Pancreas (tissue), 10 donors: ENCODE measurements at regions of chr3 and their contacts with region 1.

Region 1: DNA sequence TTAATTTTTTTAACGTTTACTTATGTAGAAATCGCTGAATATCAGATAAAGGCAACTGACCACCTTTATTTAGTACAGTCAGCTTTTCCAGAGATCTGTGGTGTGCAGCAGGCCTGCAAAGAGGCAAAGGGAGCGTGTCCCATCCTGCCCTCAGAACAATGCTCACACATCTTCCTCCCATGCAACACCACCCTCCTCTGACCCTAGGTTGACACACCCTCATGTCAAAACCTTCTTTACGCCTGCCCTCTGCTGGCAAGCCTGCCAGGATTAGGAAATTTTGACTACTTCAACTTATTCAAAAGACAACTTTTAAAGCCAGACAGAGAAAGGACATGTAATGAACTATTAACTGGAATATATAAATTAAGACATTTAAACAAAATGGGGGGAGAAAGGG is 513.7 kb downstream of the FOXP1 start:
- DNase-seq: peak in 2 of 6 donors; percentile 31 to 41
- ATAC-seq: peak in 2 of 4 donors; percentile 18 to 36
- H3K4me3 ChIP-seq: no peak overlapping the region
- H3K27ac ChIP-seq: no peak overlapping the region
- H3K4me1 ChIP-seq: peaks cover 4 to 23% (median 19%) of the 10 kb centered on the region in 3 donors
- H3K27me3 ChIP-seq: no peaks in the 10 kb centered on the region
- CTCF ChIP-seq: peak in 1 of 4 donors; percentile 10

Region 2: GRCh38 chr3:70832441-70833181 is 237.2 kb before region 1 on chr3:
- intact Hi-C with region 1: no loop called
- DNase-seq: no peak
- ATAC-seq: peak in 3 of 4 donors; percentile 39 to 86 (median 70)
- H3K4me3 ChIP-seq: no peak overlapping the region
- H3K27ac ChIP-seq: no peak overlapping the region
- H3K4me1 ChIP-seq: peaks cover 0 to 3% (median 0%) of the 10 kb centered on the region in 3 donors
- H3K27me3 ChIP-seq: no peaks in the 10 kb centered on the region
- CTCF ChIP-seq: no peak

Region 3: GRCh38 chr3:70943886-70944285 is 125.9 kb before region 1 on chr3:
- intact Hi-C with region 1: no loop called
- DNase-seq: no peak
- ATAC-seq: no peak
- H3K4me3 ChIP-seq: no peak overlapping the region
- H3K27ac ChIP-seq: no peak overlapping the region
- H3K4me1 ChIP-seq: no peaks in the 10 kb centered on the region
- H3K27me3 ChIP-seq: no peaks in the 10 kb centered on the region
- CTCF ChIP-seq: no peak

Region 4: GRCh38 chr3:71121429-71122167 is 51.8 kb after region 1 on chr3:
- intact Hi-C with region 1: loop called in 2 of 3 experiments (anchors 5 to 10 kb)
- DNase-seq: no peak
- ATAC-seq: peak in 2 of 4 donors; percentile 25 to 49
- H3K4me3 ChIP-seq: no peak overlapping the region
- H3K27ac ChIP-seq: peak overlapping the region in 1 of 4 donors; percentile 44
- H3K4me1 ChIP-seq: peaks cover 6 to 22% (median 21%) of the 10 kb centered on the region in 3 donors
- H3K27me3 ChIP-seq: no peaks in the 10 kb centered on the region
- CTCF ChIP-seq: no peak

Region 5: DNA sequence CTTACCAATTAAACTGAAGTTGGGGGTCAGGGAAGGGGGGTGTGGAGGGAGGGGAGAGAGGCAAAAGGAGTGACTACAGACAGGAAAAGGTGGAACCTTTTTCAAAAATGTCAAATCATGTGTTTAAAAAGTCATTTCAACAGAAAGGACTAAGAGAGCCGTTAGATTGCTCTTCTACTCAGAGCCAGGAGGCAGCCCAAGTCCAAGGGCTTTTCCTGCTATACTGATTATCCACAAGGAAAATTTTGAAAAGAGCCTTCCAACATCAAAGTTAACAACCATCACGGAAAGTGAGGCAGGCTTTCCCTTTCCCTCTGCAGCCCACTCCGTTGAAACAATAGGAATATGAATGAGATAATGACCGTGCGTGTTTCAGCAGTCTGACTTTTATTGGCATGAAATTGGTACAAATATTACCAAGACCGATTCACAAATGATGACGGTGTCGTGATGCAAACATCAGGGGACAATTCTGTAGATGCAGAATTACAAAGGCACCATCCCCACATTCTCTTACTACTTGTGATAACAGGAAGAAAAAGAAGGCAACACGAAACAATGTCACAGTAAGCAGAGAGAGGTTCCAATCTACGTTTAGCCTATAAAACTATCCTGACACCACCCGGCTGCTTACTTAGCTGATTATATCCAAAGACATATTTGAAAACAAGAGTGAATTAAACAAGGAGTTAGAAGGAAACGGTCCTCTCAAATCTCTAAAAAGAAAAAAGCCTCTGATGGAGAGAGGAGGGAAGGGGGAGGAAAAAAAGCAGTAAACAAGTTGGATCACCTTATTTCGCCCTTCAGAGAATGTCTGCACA is 60.0 kb after region 1 on chr3:
- intact Hi-C with region 1: loop called in 1 of 3 experiments (anchors 10 kb)
- DNase-seq: no peak
- ATAC-seq: peak; percentile 13 to 21 (median 20)
- H3K4me3 ChIP-seq: peak overlapping the region; percentile 17 to 48 (median 36)
- H3K27ac ChIP-seq: peak overlapping the region; percentile 71 to 90 (median 82)
- H3K4me1 ChIP-seq: peaks cover 23 to 50% (median 30%) of the 10 kb centered on the region in 3 donors
- H3K27me3 ChIP-seq: no peaks in the 10 kb centered on the region
- CTCF ChIP-seq: no peak

Region 6: DNA sequence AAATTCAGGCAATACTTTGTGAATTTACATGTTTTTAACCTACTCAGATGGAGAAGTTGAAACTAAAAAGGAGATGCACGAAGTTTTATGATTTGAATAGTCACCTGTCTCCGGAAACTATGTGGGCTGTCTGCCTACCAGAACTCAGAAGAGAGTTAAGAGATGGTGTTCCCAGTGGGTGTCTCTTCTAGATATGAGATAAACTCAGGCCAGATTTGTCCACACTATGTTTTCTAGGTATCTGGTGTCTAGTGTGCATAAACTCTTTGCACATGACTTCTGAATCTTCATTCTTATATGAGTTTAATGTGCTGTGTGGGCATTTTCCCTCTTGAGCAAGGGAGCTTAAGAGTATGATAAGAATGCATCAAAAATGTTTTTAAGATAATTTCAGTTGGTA is 291.0 kb after region 1 on chr3:
- intact Hi-C with region 1: no loop called
- DNase-seq: no peak
- ATAC-seq: no peak
- H3K4me3 ChIP-seq: no peak overlapping the region
- H3K27ac ChIP-seq: no peak overlapping the region
- H3K4me1 ChIP-seq: no peaks in the 10 kb centered on the region
- H3K27me3 ChIP-seq: no peaks in the 10 kb centered on the region
- CTCF ChIP-seq: no peak